MCF 10A (cell line): ENCODE measurements at regions of chr1 and their contacts with region 1.

Region 1: GRCh38 chr1:67618285-67619018 is 66.5 kb upstream of the GADD45A start:
- DNase-seq: peak; percentile 70
- H3K4me3 Mint-ChIP-seq: peak overlapping the region; percentile 47
- H3K27ac Mint-ChIP-seq: peak overlapping the region; percentile 94
- H3K4me1 Mint-ChIP-seq: peaks cover 32% of the 10 kb centered on the region
- H3K27me3 Mint-ChIP-seq: no peaks in the 10 kb centered on the region
- CTCF ChIP-seq: no peak

Region 2: DNA sequence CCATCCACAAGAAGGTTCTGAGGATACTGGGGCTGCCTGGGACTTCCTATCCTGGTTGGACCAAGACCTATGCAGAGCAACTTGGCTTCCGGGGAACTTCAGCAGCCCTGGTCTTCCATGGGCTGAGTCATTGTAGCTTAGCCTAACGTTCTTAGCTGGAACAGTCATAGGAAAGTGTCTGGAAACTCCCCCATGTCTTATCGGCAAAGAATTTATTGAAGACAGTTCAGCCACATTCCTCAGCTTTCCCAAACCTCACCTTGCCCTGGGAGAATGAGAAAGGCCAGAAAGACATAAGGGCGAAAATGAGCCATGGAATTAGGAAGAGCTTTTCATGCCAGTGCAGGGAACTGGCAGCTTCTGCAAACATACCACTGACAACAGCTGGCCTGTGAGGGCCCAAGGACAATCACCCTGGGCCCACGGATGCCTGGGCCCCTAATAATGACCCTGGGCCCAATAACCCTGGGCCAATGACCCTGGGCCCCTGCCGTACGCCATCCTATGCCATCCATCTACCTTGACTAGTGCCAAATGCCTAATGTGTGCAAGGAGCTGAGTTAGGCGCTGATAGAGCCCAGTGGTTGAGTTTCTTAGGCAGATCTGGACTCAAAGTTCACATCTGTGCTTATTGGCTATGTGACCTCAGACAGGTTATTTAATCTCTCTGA is 47.8 kb before region 1 on chr1:
- CTCF ChIA-PET with region 1: interaction called, 3 read pairs
- POLR2A ChIA-PET with region 1: interaction called, 13 read pairs
- intact Hi-C with region 1: no loop called
- DNase-seq: peak; percentile 80
- H3K4me3 Mint-ChIP-seq: no peak overlapping the region
- H3K27ac Mint-ChIP-seq: peak overlapping the region; percentile 76
- H3K4me1 Mint-ChIP-seq: peaks cover 48% of the 10 kb centered on the region
- H3K27me3 Mint-ChIP-seq: no peaks in the 10 kb centered on the region
- CTCF ChIP-seq: no peak

Region 3: GRCh38 chr1:67629370-67630075 is 11.1 kb after region 1 on chr1:
- CTCF ChIA-PET with region 1: no interaction called
- POLR2A ChIA-PET with region 1: interaction called, 12 read pairs
- intact Hi-C with region 1: no loop called
- DNase-seq: peak; percentile 71
- H3K4me3 Mint-ChIP-seq: no peak overlapping the region
- H3K27ac Mint-ChIP-seq: no peak overlapping the region
- H3K4me1 Mint-ChIP-seq: peaks cover 30% of the 10 kb centered on the region
- H3K27me3 Mint-ChIP-seq: no peaks in the 10 kb centered on the region
- CTCF ChIP-seq: no peak